Vagina (tissue), 2 donors: ENCODE measurements at regions of chr5 and their contacts with region 1.

Region 1: DNA sequence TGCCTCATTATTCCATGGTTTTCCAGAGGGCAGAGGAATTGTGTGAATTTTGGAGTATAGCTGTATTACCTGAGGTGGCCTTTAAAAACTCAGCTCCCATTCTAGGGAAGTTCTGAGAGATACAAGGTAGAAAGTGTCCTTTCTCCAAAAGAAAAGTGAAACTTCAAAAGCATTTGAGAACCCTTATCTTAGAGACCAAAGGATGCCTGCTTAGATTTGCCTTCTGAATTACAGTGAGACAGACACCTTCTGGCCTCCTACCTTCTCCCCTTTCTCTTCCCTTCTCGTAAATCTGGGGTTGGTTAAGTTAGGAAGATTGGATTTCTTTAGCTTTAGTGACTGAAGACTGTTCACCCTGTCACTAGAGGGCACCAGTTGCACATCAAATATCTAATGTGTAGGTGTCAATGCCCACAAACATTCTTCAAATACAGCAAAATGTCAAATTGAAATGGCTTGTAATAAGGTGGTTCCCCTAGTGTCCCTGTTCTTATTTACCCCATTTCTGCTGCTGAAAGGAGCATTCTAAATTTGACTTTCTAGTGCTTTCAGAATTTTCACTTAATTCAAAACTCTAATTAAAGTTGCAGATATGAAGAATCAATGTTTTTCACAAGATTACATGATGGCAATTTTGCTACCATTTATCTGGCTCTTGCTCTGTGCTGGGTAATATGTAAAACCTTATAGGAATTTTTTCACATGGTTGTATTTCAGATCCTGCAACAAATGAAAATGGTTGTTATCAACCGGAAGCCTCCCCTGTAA is 46.7 kb downstream of the PRRC1 start:
- DNase-seq: no peak
- H3K4me3 ChIP-seq: no peak overlapping the region
- H3K27ac ChIP-seq: no peak overlapping the region
- H3K4me1 ChIP-seq: no peaks in the 10 kb centered on the region
- H3K27me3 ChIP-seq: no peaks in the 10 kb centered on the region
- CTCF ChIP-seq: peak; percentile 42 to 68 (median 48)
- POLR2A ChIP-seq: no peak

Region 2: DNA sequence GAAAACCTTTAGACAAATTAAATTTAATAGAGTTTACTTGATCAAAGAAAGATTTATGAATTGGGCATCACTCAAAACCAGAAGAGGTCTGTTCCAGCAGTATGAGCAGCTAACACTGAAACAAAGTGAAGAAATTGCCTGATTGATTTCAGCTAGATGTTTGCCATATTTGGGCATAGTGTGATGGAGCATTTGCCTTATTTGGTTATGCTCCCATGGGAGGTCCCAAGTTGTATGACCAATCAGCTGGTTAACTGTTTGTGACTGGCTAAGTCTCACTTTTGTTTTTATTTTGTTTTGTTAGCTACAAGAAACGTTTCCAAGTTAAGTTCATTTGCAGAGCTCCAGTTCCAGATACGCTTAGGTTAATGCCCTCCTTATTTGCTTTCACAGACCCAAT is 840.5 kb before region 1 on chr5:
- intact Hi-C with region 1: no loop called
- DNase-seq: no peak
- H3K4me3 ChIP-seq: no peak overlapping the region
- H3K27ac ChIP-seq: no peak overlapping the region
- H3K4me1 ChIP-seq: no peaks in the 10 kb centered on the region
- H3K27me3 ChIP-seq: no peaks in the 10 kb centered on the region
- CTCF ChIP-seq: no peak
- POLR2A ChIP-seq: no peak

Region 3: GRCh38 chr5:128083033-128083810 is 519.0 kb after region 1 on chr5 and contains the start of gene SLC12A2:
- intact Hi-C with region 1: loop called (anchors 10 kb)
- DNase-seq: peak in 1 of 2 donors; percentile 95
- H3K4me3 ChIP-seq: peak within 1 kb of the TSS; percentile 82 to 97
- H3K27ac ChIP-seq: peak within 1 kb of the TSS; percentile 88
- H3K4me1 ChIP-seq: peaks cover 50% of the 10 kb centered on the region
- H3K27me3 ChIP-seq: no peaks in the 10 kb centered on the region
- CTCF ChIP-seq: peak in 1 of 3 experiments; percentile 12
- POLR2A ChIP-seq: peak in 1 of 2 donors; percentile 86
- total RNA-seq, gene SLC12A2: 15.7 TPM

Region 4: GRCh38 chr5:128201065-128201926 is 637.1 kb after region 1 on chr5:
- intact Hi-C with region 1: loop called (anchors 5 kb)
- DNase-seq: no peak
- H3K4me3 ChIP-seq: no peak overlapping the region
- H3K27ac ChIP-seq: no peak overlapping the region
- H3K4me1 ChIP-seq: no peaks in the 10 kb centered on the region
- H3K27me3 ChIP-seq: no peaks in the 10 kb centered on the region
- CTCF ChIP-seq: peak; percentile 61 to 84 (median 79)
- POLR2A ChIP-seq: no peak